Activated CD4-positive, alpha-beta memory T cell treated with anti-CD3 and anti-CD28 coated beads for 36 hours (primary cell): ENCODE measurements at regions of chr11 and their contacts with region 1.

Region 1: DNA sequence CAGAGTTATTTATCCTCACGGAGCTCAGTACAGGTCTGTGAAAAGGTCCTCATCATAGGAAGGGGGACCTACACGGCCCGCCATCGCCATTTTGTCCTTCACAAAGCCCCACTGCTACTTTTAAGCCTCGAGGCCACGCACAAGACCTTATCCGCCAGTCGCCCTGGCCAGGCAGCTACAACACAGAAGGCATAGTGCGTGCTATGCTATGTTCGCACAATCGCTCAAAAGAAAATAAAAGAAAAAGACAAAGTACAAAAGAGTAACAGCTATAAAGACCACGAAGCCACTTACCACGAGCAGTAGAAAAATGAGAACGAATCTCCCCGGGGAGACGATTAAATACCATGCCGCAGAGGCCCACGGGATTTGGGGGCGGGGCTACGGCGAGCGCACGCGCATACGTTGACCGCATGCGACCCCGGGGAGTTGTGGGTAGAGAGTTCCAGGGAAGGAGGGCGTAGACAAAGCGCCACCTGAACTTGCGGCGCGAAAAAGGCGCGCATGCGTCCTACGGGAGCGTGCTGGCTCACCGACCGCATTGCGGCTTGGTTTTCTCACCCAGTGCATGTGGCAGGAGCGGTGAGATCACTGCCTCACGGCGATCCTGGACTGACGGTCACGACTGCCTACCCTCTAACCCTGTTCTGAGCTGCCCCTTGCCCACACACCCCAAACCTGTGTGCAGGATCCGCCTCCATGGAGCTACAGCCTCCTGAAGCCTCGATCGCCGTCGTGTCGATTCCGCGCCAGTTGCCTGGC is 16.4 kb upstream of the WDR74 start:
- DNase-seq: peak; percentile 99
- H3K4me3 Mint-ChIP-seq: peak overlapping the region; percentile 95
- H3K27ac Mint-ChIP-seq: peak overlapping the region; percentile 94
- H3K4me1 Mint-ChIP-seq: peaks cover 57% of the 10 kb centered on the region
- H3K27me3 Mint-ChIP-seq: peaks cover 3% of the 10 kb centered on the region

Region 2: GRCh38 chr11:62427630-62428233 is 428.0 kb before region 1 on chr11:
- CTCF ChIA-PET with region 1: interaction called, 13 read pairs
- POLR2A ChIA-PET with region 1: no interaction called
- intact Hi-C with region 1: no loop called
- DNase-seq: peak; percentile 39
- H3K4me3 Mint-ChIP-seq: peak overlapping the region; percentile 27
- H3K27ac Mint-ChIP-seq: peak overlapping the region; percentile 79
- H3K4me1 Mint-ChIP-seq: peaks cover 32% of the 10 kb centered on the region
- H3K27me3 Mint-ChIP-seq: no peaks in the 10 kb centered on the region

Region 3: DNA sequence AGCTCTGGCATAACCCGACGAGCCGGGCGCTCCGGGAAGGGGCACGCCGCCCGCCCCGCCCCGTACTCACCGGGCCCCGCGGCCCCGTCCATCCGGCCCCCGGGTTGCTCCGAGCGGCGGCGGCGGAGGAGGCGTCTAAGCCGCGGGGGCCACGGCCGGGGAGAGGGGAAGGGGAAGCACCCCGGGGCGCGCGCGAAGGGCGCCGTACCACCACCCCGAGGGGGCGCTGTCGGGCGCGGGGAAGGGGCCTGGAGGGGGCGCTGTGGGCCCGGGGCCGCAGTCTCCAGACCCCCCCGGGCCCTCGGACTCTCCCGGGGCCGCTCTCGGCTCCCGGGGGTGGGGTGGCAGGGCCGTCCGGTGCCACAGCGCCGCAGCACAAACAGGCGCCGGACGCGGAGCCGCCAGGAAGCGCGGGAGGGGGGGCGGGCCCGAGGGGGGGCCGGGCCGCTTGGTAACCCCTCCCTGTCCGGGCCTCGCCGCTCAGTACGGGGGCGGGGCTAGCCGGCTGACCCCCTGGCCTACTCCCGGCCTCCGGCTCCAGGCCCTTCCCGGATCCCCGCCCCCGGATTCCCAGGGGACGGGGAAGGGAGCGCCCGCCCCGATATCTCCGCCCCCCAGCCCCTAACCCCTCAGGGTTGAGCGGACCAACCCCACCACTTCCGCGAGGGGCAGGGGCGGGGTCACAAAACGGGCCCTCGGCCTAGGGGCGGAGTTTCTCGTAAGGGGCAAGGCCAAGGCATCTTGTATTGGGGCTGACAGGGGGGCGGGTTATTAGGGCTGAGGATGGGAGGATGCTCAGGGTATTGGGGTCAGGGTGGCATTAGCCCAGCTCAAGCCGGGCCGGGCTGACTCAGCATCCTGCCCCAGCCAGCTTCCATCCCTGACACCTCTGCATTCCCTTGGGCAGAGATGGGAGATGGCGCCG is 243.1 kb before region 1 on chr11 and contains the starts of genes EML3 and ROM1:
- CTCF ChIA-PET with region 1: no interaction called
- POLR2A ChIA-PET with region 1: no interaction called
- intact Hi-C with region 1: loop called (anchors 2 kb)
- DNase-seq: peak; percentile 90
- H3K4me3 Mint-ChIP-seq: peak within 1 kb of the TSS; percentile 90
- H3K27ac Mint-ChIP-seq: peak within 1 kb of the TSS; percentile 95
- H3K4me1 Mint-ChIP-seq: peaks cover 45% of the 10 kb centered on the region
- H3K27me3 Mint-ChIP-seq: no peaks in the 10 kb centered on the region
- total RNA-seq, gene EML3: 113 to 116 TPM
- total RNA-seq, gene ROM1: 1.1 to 1.5 TPM

Region 4: GRCh38 chr11:62705880-62706849 is 149.6 kb before region 1 on chr11:
- CTCF ChIA-PET with region 1: no interaction called
- POLR2A ChIA-PET with region 1: interaction called, 3 read pairs
- intact Hi-C with region 1: loop called (anchors 1 kb)
- DNase-seq: peak; percentile 96
- H3K4me3 Mint-ChIP-seq: peak overlapping the region; percentile 85
- H3K27ac Mint-ChIP-seq: peak overlapping the region; percentile 70
- H3K4me1 Mint-ChIP-seq: peaks cover 50% of the 10 kb centered on the region
- H3K27me3 Mint-ChIP-seq: no peaks in the 10 kb centered on the region

Region 5: DNA sequence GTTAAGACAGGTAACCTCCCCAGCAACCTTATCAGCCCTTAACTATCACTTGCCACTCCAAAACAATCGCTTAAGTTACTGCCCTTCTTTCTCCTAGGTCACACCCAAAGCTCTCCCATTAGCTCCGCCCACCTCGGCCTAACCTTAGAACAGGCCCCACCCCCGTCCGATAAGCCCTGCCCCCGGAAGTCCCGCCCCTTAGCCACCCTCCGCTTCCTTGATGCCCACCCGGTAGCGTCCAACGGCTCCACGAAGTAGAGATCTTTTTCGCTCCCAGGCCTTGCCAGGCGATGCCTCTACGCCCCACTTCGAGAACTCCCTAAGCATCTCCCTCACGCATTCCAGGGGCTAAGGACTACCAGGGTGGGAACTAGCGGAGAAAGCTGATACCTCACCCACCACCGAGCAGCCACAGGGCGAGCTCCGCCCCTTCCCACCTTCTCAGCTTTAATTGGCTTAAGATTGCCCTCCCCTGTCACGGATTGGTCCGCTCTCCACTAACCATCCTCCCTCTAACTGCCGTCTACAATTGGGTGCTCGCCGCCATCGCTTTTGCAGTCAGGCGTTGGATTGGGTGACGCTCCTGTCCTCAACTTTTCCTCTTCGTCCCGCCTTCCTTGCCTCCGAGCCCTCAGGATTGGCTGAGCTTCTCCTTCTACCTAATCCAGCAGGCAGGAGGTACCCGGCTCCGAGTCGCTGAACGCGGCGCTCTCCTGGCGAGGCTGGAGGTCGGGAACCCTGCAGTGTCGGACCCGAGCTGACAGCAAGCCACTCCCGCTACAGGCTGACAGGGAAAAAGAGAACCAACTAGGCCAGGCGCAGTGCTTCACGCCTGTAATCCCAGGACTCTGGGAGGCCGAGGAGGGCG is 101.8 kb before region 1 on chr11 and contains the start of gene ZBTB3:
- CTCF ChIA-PET with region 1: no interaction called
- POLR2A ChIA-PET with region 1: interaction called, 26 read pairs
- intact Hi-C with region 1: no loop called
- DNase-seq: peak; percentile 98
- H3K4me3 Mint-ChIP-seq: peak within 1 kb of the TSS; percentile 99
- H3K27ac Mint-ChIP-seq: peak within 1 kb of the TSS; percentile 99
- H3K4me1 Mint-ChIP-seq: peaks cover 23% of the 10 kb centered on the region
- H3K27me3 Mint-ChIP-seq: no peaks in the 10 kb centered on the region
- total RNA-seq, gene ZBTB3: 8.4 to 9.7 TPM

Region 6: GRCh38 chr11:62805076-62805892 is 50.5 kb before region 1 on chr11 and contains the start of gene NXF1:
- CTCF ChIA-PET with region 1: interaction called, 7 read pairs
- POLR2A ChIA-PET with region 1: interaction called, 36 read pairs
- intact Hi-C with region 1: loop called (anchors 1 kb)
- DNase-seq: peak; percentile 96
- H3K4me3 Mint-ChIP-seq: peak within 1 kb of the TSS; percentile 99
- H3K27ac Mint-ChIP-seq: peak within 1 kb of the TSS; percentile 99
- H3K4me1 Mint-ChIP-seq: peaks cover 34% of the 10 kb centered on the region
- H3K27me3 Mint-ChIP-seq: no peaks in the 10 kb centered on the region
- total RNA-seq, gene NXF1: 70.8 to 83.6 TPM

Region 7: DNA sequence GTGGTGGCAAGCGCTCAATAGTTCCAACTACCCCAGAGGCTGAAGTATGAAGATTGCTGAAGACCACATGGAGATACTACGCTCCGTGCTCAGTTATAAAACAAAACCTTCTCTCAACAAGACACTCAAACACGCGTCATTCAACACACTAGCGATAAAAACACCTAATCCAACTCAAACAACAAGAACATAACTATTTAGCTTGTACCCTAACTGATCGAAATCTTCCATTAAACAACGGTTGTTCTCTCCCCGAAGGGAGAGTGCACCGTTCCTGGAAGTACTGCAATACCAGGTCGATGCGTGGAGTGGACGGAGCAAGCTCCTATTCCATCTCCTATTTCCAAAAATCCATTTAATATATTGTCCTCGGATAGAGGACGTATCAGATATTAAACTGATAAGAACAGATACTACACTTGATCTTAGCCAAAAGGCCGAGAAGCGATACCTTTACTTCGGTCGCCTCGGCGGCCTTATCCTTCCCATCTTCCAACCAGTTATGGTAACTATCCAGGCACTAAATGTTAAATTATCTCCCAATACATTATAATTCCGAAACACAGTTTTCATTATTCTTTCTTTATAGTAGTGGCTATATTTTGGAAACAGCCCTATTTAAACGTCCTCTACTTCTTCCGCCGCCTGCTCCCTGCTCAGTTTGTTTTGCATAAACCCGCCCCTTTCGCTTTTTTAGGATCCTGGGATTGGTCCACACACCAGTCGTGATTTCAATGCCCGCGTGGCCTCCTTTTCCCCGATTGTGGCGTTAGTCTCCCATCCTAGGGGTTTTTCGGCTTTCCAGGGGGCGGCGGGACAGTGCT is 14.2 kb before region 1 on chr11:
- CTCF ChIA-PET with region 1: interaction called, 12 read pairs
- POLR2A ChIA-PET with region 1: interaction called, 443 read pairs
- intact Hi-C with region 1: loop called (anchors 1 kb)
- DNase-seq: peak; percentile 88
- H3K4me3 Mint-ChIP-seq: no peak overlapping the region
- H3K27ac Mint-ChIP-seq: no peak overlapping the region
- H3K4me1 Mint-ChIP-seq: peaks cover 17% of the 10 kb centered on the region
- H3K27me3 Mint-ChIP-seq: no peaks in the 10 kb centered on the region